ENCODE measurements at regions of chr13 and their contacts with region 1.

Region 1: GRCh38 chr13:44273644-44274451 is 99.8 kb upstream of the SERP2 start:
- DNase-seq: no peak
- H3K4me3 ChIP-seq: peak overlapping the region; percentile 4 to 28 (median 16)
- H3K27ac ChIP-seq: peak overlapping the region; percentile 79 to 90 (median 84)
- H3K4me1 ChIP-seq: peaks cover 38 to 74% (median 69%) of the 10 kb centered on the region in 4 donors
- H3K27me3 ChIP-seq: no peaks in the 10 kb centered on the region
- CTCF ChIP-seq: no peak
- EP300 ChIP-seq: no peak
- POLR2A ChIP-seq: no peak

Region 2: GRCh38 chr13:44305917-44306371 is 32.1 kb after region 1 on chr13:
- intact Hi-C with region 1: loop called (anchors 2 kb)
- DNase-seq: no peak
- H3K4me3 ChIP-seq: no peak overlapping the region
- H3K27ac ChIP-seq: peak overlapping the region; percentile 86 to 92 (median 88)
- H3K4me1 ChIP-seq: peaks cover 82 to 100% (median 96%) of the 10 kb centered on the region in 4 donors
- H3K27me3 ChIP-seq: no peaks in the 10 kb centered on the region
- CTCF ChIP-seq: no peak
- EP300 ChIP-seq: no peak
- POLR2A ChIP-seq: no peak